Ovary (tissue), 10 donors: ENCODE measurements at regions of chr7 and their contacts with region 1.

Region 1: GRCh38 chr7:74223711-74224510 is 14.1 kb downstream of the LAT2 start:
- DNase-seq: peak; percentile 60 to 86 (median 76)
- H3K4me3 ChIP-seq: no peak overlapping the region
- H3K27ac ChIP-seq: no peak overlapping the region
- H3K4me1 ChIP-seq: peaks cover 5% of the 10 kb centered on the region
- H3K27me3 ChIP-seq: no peaks in the 10 kb centered on the region
- CTCF ChIP-seq: no peak
- EP300 ChIP-seq: no peak
- POLR2A ChIP-seq: no peak

Region 2: DNA sequence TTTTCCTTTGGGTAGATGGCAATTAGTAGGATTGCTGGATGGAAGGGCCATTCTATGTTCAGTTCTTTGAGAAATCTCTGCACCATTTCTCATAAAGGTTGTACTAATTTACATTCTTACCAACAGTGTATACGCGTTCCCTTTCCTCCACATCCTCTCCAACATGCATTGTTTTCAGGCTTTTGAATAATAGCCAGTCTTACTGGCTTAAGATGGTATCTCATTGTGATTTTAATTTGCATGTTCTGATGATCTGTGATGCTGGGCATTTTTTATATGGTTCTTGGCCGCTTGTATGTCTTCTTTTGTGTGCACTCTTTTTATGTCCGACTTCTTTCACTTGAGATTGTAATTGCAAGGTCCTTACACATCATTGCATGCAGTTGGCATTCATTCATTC is 77.0 kb after region 1 on chr7:
- intact Hi-C with region 1: loop called in 1 of 4 experiments (anchors 2 kb)
- DNase-seq: no peak
- H3K4me3 ChIP-seq: no peak overlapping the region
- H3K27ac ChIP-seq: no peak overlapping the region
- H3K4me1 ChIP-seq: peaks cover 7% of the 10 kb centered on the region
- H3K27me3 ChIP-seq: no peaks in the 10 kb centered on the region
- CTCF ChIP-seq: no peak
- EP300 ChIP-seq: no peak
- POLR2A ChIP-seq: no peak